ENCODE measurements at regions of chr6 and their contacts with region 1.

Region 1: GRCh38 chr6:125670568-125670967 is 78.9 kb upstream of the HEY2 start:
- DNase-seq: peak; percentile 34 to 45
- ATAC-seq: peak; percentile 55
- H3K4me3 ChIP-seq: no peak overlapping the region
- H3K27ac ChIP-seq: peak overlapping the region; percentile 49 to 93
- H3K4me1 ChIP-seq: peaks cover 4 to 11% of the 10 kb centered on the region in 2 donors
- H3K27me3 ChIP-seq: no peaks in the 10 kb centered on the region

Region 2: GRCh38 chr6:125598422-125598821 is 72.1 kb before region 1 on chr6:
- intact Hi-C with region 1: loop called in 1 of 2 experiments (anchors 5 kb)
- DNase-seq: peak; percentile 87 to 91
- ATAC-seq: peak; percentile 82
- H3K4me3 ChIP-seq: no peak overlapping the region
- H3K27ac ChIP-seq: no peak overlapping the region
- H3K4me1 ChIP-seq: no peaks in the 10 kb centered on the region
- H3K27me3 ChIP-seq: no peaks in the 10 kb centered on the region

Measured in aorta (tissue), 5 donors.